Activated CD8-positive, alpha-beta memory T cell treated with anti-CD3 and anti-CD28 coated beads, Interleukin-2, amount 10 ng/mL, durations not matched to agents 7 days and 5 days (primary cell): ENCODE measurements at regions of chr1 and their contacts with region 1.

Region 1: DNA sequence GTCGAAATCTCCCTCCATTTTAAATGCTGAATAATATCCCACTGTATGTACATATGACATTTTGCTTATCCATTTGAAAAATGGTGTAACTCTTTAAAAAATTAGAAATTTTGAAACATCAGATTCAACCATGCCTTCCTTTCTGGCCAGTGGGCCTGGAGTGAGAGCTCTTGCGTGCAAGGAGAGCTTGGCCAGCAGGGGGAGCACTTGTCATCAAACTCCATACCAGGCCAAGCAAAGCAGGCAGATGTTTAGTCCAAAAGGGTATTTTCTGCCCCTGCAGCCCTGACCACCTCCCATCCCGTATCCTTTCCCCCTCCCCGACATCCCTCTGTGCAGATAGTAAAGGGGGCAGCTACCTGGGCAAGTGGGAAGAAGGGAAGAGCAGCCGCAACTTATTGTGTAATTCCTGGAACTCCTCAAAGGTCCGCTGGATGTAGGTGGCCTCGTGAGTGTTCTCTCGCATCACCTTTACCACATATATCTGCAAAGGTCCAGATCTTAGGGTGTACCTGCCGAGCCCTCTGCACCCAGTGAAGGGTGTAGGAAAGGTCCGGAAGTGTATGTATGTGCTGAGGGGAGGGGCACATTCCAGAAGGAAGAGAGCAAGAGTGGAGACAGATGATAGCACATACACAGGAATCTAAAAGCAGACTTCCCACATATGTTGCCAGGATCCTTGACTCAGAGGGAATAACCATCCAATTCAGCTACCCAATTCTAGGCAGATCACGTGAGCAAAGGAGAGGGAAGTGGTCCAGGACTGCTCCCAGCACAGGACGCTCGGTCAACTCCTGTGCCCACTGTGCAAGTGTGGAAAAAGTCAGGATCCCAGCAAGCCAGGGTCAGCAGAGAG is 19.9 kb upstream of the PPP1R15B start:
- DNase-seq: peak; percentile 85
- ATAC-seq: peak; percentile 88
- H3K4me3 Mint-ChIP-seq: no peak overlapping the region
- H3K27ac Mint-ChIP-seq: peak overlapping the region; percentile 20
- H3K4me1 Mint-ChIP-seq: no peaks in the 10 kb centered on the region
- H3K27me3 Mint-ChIP-seq: no peaks in the 10 kb centered on the region

Region 2: DNA sequence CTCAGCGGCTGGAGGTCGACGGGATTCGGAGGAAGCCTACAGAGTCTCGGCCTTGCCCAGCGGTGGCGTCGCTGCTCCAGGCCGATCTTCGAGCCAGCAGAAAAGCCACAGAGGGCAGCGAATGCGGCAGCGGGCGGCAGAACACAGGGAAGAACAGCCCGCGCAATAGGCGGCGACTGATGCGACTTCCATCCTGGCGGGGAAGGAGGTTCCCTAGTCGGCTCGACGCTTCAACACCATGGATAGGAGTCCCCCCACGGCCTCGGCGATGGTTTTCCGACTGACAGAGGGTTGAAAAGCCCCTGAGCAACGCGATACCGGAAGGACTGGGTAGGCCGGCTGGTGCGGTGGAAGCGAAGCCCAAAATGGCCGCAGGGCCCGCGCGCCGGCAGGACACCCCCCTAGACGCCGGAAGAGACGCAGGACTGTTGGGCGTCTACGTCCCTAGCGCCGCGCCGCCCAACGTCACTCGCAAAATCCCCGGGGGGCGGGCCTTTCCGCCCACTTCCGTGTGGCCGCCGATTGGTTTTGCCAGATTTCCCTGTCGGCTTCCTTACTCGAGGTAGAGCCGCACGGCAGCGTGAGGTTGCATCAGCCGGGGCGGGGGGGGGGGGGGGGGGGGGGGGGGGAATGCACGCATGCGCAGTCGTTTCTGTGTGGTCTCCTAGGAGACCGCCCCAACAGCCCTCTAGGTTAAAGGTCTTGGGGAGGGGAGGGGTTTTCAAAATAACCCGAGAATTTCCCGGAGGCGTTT is 19.9 kb before region 1 on chr1 and contains the start of gene PPP1R15B:
- CTCF ChIA-PET with region 1: interaction called, 30 read pairs
- DNase-seq: peak; percentile 98
- ATAC-seq: peak; percentile 91
- H3K4me3 Mint-ChIP-seq: peak within 1 kb of the TSS; percentile 92
- H3K27ac Mint-ChIP-seq: peak within 1 kb of the TSS; percentile 100
- H3K4me1 Mint-ChIP-seq: peaks cover 16% of the 10 kb centered on the region
- H3K27me3 Mint-ChIP-seq: no peaks in the 10 kb centered on the region
- total RNA-seq, gene PPP1R15B: 75.5 to 81.7 TPM

Region 3: GRCh38 chr1:204417231-204417997 is 14.1 kb before region 1 on chr1:
- CTCF ChIA-PET with region 1: interaction called, 30 read pairs
- DNase-seq: peak; percentile 42
- ATAC-seq: peak; percentile 50
- H3K4me3 Mint-ChIP-seq: no peak overlapping the region
- H3K27ac Mint-ChIP-seq: no peak overlapping the region
- H3K4me1 Mint-ChIP-seq: peaks cover 38% of the 10 kb centered on the region
- H3K27me3 Mint-ChIP-seq: no peaks in the 10 kb centered on the region

Region 4: GRCh38 chr1:204465546-204466415 is 34.2 kb after region 1 on chr1:
- CTCF ChIA-PET with region 1: interaction called, 18 read pairs
- DNase-seq: no peak
- ATAC-seq: no peak
- H3K4me3 Mint-ChIP-seq: no peak overlapping the region
- H3K27ac Mint-ChIP-seq: no peak overlapping the region
- H3K4me1 Mint-ChIP-seq: peaks cover 44% of the 10 kb centered on the region
- H3K27me3 Mint-ChIP-seq: no peaks in the 10 kb centered on the region